Naive thymus-derived CD4-positive, alpha-beta T cell (primary cell): ENCODE measurements at regions of chr1 and their contacts with region 1.

Region 1: GRCh38 chr1:155934097-155934935 is at the start of gene KHDC4:
- DNase-seq: peak; percentile 79 to 98 (median 97)
- ATAC-seq: peak; percentile 97
- H3K4me3 ChIP-seq: peak within 1 kb of the TSS; percentile 87
- H3K4me3 Mint-ChIP-seq: no peak within 1 kb of the TSS
- H3K27ac ChIP-seq: peak within 1 kb of the TSS; percentile 89
- H3K27ac Mint-ChIP-seq: peak within 1 kb of the TSS in 1 of 9 donors; percentile 22
- H3K4me1 ChIP-seq: peaks cover 40 to 42% of the 10 kb centered on the region in 2 donors
- H3K4me1 Mint-ChIP-seq: peaks cover 15 to 42% (median 37%) of the 10 kb centered on the region in 7 donors
- H3K27me3 ChIP-seq: no peaks in the 10 kb centered on the region
- H3K27me3 Mint-ChIP-seq: no peaks in the 10 kb centered on the region
- total RNA-seq, gene KHDC4: 64.6 to 117 (median 79.8) TPM

Region 2: DNA sequence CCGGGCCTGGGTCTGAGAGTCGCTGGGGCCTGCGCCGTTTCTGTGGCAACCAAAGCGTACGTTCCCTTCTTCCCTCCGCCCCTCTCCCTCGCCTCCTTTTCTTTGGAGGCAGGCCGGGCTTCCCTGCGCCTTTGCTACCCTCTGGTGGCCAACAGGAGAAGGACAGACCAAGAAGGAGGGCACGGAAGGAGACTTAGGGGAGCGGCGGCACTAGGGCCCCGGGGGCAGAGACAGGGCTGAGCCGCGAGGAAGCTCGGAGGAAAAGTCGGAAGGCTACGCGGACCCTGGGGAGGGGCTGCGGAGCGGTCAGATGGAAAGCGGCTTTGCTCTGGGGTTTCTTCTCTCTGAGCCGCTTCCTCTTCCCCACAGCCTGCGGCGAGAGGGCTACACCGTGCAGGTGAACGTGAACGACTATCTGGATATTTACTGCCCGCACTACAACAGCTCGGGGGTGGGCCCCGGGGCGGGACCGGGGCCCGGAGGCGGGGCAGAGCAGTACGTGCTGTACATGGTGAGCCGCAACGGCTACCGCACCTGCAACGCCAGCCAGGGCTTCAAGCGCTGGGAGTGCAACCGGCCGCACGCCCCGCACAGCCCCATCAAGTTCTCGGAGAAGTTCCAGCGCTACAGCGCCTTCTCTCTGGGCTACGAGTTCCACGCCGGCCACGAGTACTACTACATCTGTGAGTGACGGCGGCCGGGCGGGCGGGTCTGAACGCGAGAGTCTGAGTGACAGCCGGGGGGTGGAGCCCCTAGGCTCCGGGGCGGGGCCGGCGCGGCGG is 849.4 kb before region 1 on chr1:
- CTCF ChIA-PET with region 1: no interaction called
- POLR2A ChIA-PET with region 1: no interaction called
- intact Hi-C with region 1: no loop called
- DNase-seq: peak; percentile 87 to 96 (median 93)
- ATAC-seq: peak; percentile 86
- H3K4me3 ChIP-seq: peak overlapping the region; percentile 97
- H3K4me3 Mint-ChIP-seq: peak overlapping the region; percentile 88 to 100 (median 94)
- H3K27ac ChIP-seq: peak overlapping the region; percentile 63
- H3K27ac Mint-ChIP-seq: peak overlapping the region; percentile 88 to 98 (median 93)
- H3K4me1 ChIP-seq: peaks cover 51 to 53% of the 10 kb centered on the region in 2 donors
- H3K4me1 Mint-ChIP-seq: peaks cover 24 to 43% (median 41%) of the 10 kb centered on the region in 7 donors
- H3K27me3 ChIP-seq: peaks cover 28 to 31% of the 10 kb centered on the region in 2 donors
- H3K27me3 Mint-ChIP-seq: peaks cover 17 to 41% (median 23%) of the 10 kb centered on the region in 5 donors

Region 3: DNA sequence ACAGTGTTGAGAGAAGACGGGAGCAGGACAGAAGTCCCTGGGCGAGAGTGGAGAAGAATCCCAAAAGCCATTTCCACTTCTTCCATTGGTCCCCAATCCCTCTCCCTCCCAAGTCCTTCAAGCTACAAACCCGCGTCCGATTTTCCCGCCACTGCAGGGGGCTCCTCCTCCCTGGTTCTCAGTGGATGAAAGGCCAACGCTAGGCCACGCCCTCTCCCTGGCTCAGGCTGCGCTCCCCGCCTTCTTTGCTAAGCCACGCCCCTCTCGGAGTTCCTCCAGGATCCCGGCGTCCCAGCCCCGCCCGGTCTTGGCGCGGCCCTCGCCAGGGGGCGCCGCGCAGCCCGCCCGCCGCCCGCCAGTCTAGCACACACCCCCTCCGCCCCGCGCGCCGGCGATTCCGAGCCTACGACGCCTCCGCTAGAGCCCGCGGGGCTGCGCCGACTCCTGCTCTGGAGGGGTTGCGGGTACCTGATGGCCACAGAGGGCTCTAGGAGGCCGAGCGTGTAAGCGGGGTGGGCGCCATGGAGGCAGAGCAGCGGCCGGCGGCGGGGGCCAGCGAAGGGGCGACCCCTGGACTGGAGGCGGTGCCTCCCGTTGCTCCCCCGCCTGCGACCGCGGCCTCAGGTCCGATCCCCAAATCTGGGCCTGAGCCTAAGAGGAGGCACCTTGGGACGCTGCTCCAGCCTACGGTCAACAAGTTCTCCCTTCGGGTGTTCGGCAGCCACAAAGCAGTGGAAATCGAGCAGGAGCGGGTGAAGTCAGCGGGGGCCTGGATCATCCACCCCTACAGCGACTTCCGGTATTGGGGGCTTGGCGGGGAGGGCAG is 657.0 kb before region 1 on chr1 and contains the start of gene HCN3:
- CTCF ChIA-PET with region 1: no interaction called
- POLR2A ChIA-PET with region 1: no interaction called
- intact Hi-C with region 1: no loop called
- DNase-seq: peak; percentile 68 to 95 (median 70)
- ATAC-seq: peak; percentile 71
- H3K4me3 ChIP-seq: peak within 1 kb of the TSS; percentile 59
- H3K4me3 Mint-ChIP-seq: peak within 1 kb of the TSS; percentile 75 to 90 (median 86)
- H3K27ac ChIP-seq: peak within 1 kb of the TSS; percentile 36
- H3K27ac Mint-ChIP-seq: peak within 1 kb of the TSS in 8 of 9 donors; percentile 44 to 83 (median 69)
- H3K4me1 ChIP-seq: peaks cover 18 to 19% of the 10 kb centered on the region in 2 donors
- H3K4me1 Mint-ChIP-seq: peaks cover 24 to 47% (median 38%) of the 10 kb centered on the region in 7 donors
- H3K27me3 ChIP-seq: no peaks in the 10 kb centered on the region
- H3K27me3 Mint-ChIP-seq: peaks cover 0 to 11% (median 0%) of the 10 kb centered on the region in 5 donors
- total RNA-seq, gene HCN3: 1.6 to 3.3 (median 2.8) TPM

Region 4: GRCh38 chr1:155308493-155309422 is 625.6 kb before region 1 on chr1 and contains the start of gene FDPS:
- CTCF ChIA-PET with region 1: no interaction called
- POLR2A ChIA-PET with region 1: no interaction called
- intact Hi-C with region 1: loop called in 1 of 2 experiments (anchors 1 kb)
- DNase-seq: peak; percentile 83 to 98 (median 95)
- ATAC-seq: peak; percentile 98
- H3K4me3 ChIP-seq: peak within 1 kb of the TSS; percentile 90
- H3K4me3 Mint-ChIP-seq: peak within 1 kb of the TSS; percentile 88 to 99 (median 97)
- H3K27ac ChIP-seq: peak within 1 kb of the TSS; percentile 87
- H3K27ac Mint-ChIP-seq: peak within 1 kb of the TSS; percentile 89 to 98 (median 96)
- H3K4me1 ChIP-seq: peaks cover 11 to 20% of the 10 kb centered on the region in 2 donors
- H3K4me1 Mint-ChIP-seq: peaks cover 12 to 43% (median 27%) of the 10 kb centered on the region in 7 donors
- H3K27me3 ChIP-seq: no peaks in the 10 kb centered on the region
- H3K27me3 Mint-ChIP-seq: no peaks in the 10 kb centered on the region
- total RNA-seq, gene FDPS: 58.5 to 193 (median 79.0) TPM

Region 5: GRCh38 chr1:155911156-155912055 is 22.9 kb before region 1 on chr1 and contains the start of gene RIT1:
- CTCF ChIA-PET with region 1: no interaction called
- POLR2A ChIA-PET with region 1: interaction called, 11 read pairs
- intact Hi-C with region 1: loop called (anchors 1 kb)
- DNase-seq: peak; percentile 68 to 85 (median 76)
- ATAC-seq: peak; percentile 99
- H3K4me3 ChIP-seq: peak within 1 kb of the TSS; percentile 73
- H3K4me3 Mint-ChIP-seq: peak within 1 kb of the TSS; percentile 85 to 99 (median 96)
- H3K27ac ChIP-seq: peak within 1 kb of the TSS; percentile 80
- H3K27ac Mint-ChIP-seq: peak within 1 kb of the TSS; percentile 90 to 99 (median 96)
- H3K4me1 ChIP-seq: peaks cover 5 to 17% of the 10 kb centered on the region in 2 donors
- H3K4me1 Mint-ChIP-seq: peaks cover 11 to 38% (median 21%) of the 10 kb centered on the region in 7 donors
- H3K27me3 ChIP-seq: no peaks in the 10 kb centered on the region
- H3K27me3 Mint-ChIP-seq: no peaks in the 10 kb centered on the region
- total RNA-seq, gene RIT1: 34.0 to 83.9 (median 41.4) TPM

Region 6: DNA sequence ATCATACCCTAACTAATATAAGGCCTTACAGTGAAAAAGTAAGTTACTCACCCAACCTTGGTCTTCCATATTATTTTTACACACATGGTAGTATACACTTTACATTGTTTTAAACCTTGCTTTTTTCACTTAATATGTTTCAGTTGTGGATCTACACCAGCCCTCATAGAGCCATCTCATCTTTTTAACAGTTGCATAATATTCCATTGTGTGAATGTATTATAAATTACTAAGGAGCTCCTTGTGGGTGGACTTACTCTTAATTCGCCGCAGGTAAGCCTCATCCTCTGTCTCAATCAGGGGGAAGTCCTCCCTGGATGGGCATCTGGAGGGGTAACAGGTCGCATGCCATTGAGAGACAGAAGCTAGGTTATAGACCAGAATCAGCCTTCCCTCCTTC is 20.3 kb after region 1 on chr1:
- CTCF ChIA-PET with region 1: interaction called, 5 read pairs
- POLR2A ChIA-PET with region 1: interaction called, 11 read pairs
- intact Hi-C with region 1: no loop called
- DNase-seq: no peak
- ATAC-seq: no peak
- H3K4me3 ChIP-seq: no peak overlapping the region
- H3K4me3 Mint-ChIP-seq: no peak overlapping the region
- H3K27ac ChIP-seq: peak overlapping the region; percentile 10
- H3K27ac Mint-ChIP-seq: peak overlapping the region in 4 of 9 donors; percentile 59 to 82 (median 73)
- H3K4me1 ChIP-seq: no peaks in the 10 kb centered on the region
- H3K4me1 Mint-ChIP-seq: peaks cover 0 to 9% (median 2%) of the 10 kb centered on the region in 7 donors
- H3K27me3 ChIP-seq: no peaks in the 10 kb centered on the region
- H3K27me3 Mint-ChIP-seq: no peaks in the 10 kb centered on the region

Region 7: DNA sequence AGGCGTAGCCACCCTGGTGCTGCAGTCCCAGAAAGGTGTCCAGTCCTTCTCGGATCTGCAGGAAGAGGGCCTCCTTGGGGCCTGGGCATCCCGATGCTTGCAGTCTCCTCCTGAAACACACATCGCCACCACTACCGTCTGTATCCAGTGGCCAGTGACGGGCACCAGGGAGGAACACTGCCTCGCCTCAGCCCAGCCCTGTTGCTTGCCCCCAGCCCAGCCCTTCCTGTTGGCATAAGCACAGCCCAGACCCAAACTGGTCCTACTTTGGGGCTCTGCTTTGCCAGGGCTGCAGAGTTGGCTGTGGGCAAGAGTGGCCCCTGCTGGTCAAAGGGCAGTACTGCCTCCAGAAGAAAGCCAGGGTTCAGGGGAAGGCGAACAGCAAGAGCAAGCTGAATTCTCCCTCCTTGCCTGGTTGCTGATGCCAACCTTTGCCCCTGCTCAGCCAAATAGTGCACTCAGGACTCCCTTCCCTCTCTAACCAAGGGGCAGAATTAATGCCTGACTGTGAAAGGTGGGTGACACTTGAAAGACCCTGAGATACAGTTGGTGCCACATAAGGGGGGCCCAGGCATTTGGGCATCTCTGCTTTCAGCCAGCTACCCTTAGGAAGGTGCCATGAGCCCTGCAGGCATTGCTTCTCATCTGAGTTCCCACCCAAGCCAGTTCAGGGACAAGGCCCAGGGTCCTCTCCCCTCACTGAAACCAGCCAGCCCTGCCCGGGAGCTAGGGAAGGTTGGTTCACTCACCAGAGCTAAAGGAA is 55.1 kb after region 1 on chr1:
- CTCF ChIA-PET with region 1: interaction called, 41 read pairs
- POLR2A ChIA-PET with region 1: interaction called, 47 read pairs
- intact Hi-C with region 1: loop called (anchors 1 kb)
- DNase-seq: peak; percentile 69 to 86 (median 79)
- ATAC-seq: peak; percentile 94
- H3K4me3 ChIP-seq: no peak overlapping the region
- H3K4me3 Mint-ChIP-seq: peak overlapping the region in 2 of 10 donors; percentile 21 to 30
- H3K27ac ChIP-seq: no peak overlapping the region
- H3K27ac Mint-ChIP-seq: peak overlapping the region in 4 of 9 donors; percentile 9 to 73 (median 42)
- H3K4me1 ChIP-seq: peaks cover 10% of the 10 kb centered on the region in 2 donors
- H3K4me1 Mint-ChIP-seq: peaks cover 4 to 17% (median 11%) of the 10 kb centered on the region in 7 donors
- H3K27me3 ChIP-seq: no peaks in the 10 kb centered on the region
- H3K27me3 Mint-ChIP-seq: no peaks in the 10 kb centered on the region

Region 8: DNA sequence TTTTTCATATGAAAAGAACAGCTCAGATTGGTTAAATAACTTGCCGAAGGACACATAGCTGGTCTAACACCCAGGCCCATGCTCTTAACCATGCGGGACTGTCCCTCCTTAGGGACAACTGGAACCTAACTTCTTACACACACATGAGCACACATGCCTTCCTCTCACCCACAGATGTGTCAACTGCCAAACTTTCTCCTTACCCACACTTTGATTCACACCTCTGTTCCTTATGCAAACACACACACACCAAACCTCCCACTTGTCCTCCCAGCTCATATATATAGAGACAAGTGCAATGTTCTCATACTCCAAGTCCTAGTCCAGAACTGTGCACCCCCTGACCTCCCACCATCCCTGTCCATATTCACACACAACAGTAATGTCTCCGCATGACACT is 130.9 kb after region 1 on chr1:
- CTCF ChIA-PET with region 1: interaction called, 3 read pairs
- POLR2A ChIA-PET with region 1: no interaction called
- intact Hi-C with region 1: loop called (anchors 1 to 2 kb)
- DNase-seq: no peak
- ATAC-seq: no peak
- H3K4me3 ChIP-seq: no peak overlapping the region
- H3K4me3 Mint-ChIP-seq: no peak overlapping the region
- H3K27ac ChIP-seq: no peak overlapping the region
- H3K27ac Mint-ChIP-seq: no peak overlapping the region
- H3K4me1 ChIP-seq: no peaks in the 10 kb centered on the region
- H3K4me1 Mint-ChIP-seq: peaks cover 0 to 16% (median 5%) of the 10 kb centered on the region in 7 donors
- H3K27me3 ChIP-seq: no peaks in the 10 kb centered on the region
- H3K27me3 Mint-ChIP-seq: peaks cover 0 to 3% (median 0%) of the 10 kb centered on the region in 5 donors

Region 9: GRCh38 chr1:156282479-156283222 is 348.3 kb after region 1 on chr1 and contains the start of gene SMG5:
- CTCF ChIA-PET with region 1: no interaction called
- POLR2A ChIA-PET with region 1: no interaction called
- intact Hi-C with region 1: loop called (anchors 1 kb)
- DNase-seq: peak; percentile 89 to 98 (median 96)
- ATAC-seq: peak; percentile 95
- H3K4me3 ChIP-seq: peak within 1 kb of the TSS; percentile 93
- H3K4me3 Mint-ChIP-seq: peak within 1 kb of the TSS; percentile 85 to 99 (median 94)
- H3K27ac ChIP-seq: peak within 1 kb of the TSS; percentile 89
- H3K27ac Mint-ChIP-seq: peak within 1 kb of the TSS; percentile 89 to 98 (median 95)
- H3K4me1 ChIP-seq: peaks cover 15 to 22% of the 10 kb centered on the region in 2 donors
- H3K4me1 Mint-ChIP-seq: peaks cover 29 to 51% (median 39%) of the 10 kb centered on the region in 7 donors
- H3K27me3 ChIP-seq: no peaks in the 10 kb centered on the region
- H3K27me3 Mint-ChIP-seq: peaks cover 0 to 3% (median 0%) of the 10 kb centered on the region in 5 donors
- total RNA-seq, gene SMG5: 65.7 to 74.0 (median 69.4) TPM